OCI-LY7 (cell line): ENCODE measurements at regions of chr12 and their contacts with region 1.

Region 1: GRCh38 chr12:95574799-95575452 is 23.6 kb upstream of the USP44 start:
- DNase-seq: no peak
- H3K4me3 ChIP-seq: no peak overlapping the region
- H3K27ac ChIP-seq: peak overlapping the region; percentile 38
- H3K4me1 ChIP-seq: peaks cover 52% of the 10 kb centered on the region
- CTCF ChIP-seq: peak; percentile 88

Region 2: DNA sequence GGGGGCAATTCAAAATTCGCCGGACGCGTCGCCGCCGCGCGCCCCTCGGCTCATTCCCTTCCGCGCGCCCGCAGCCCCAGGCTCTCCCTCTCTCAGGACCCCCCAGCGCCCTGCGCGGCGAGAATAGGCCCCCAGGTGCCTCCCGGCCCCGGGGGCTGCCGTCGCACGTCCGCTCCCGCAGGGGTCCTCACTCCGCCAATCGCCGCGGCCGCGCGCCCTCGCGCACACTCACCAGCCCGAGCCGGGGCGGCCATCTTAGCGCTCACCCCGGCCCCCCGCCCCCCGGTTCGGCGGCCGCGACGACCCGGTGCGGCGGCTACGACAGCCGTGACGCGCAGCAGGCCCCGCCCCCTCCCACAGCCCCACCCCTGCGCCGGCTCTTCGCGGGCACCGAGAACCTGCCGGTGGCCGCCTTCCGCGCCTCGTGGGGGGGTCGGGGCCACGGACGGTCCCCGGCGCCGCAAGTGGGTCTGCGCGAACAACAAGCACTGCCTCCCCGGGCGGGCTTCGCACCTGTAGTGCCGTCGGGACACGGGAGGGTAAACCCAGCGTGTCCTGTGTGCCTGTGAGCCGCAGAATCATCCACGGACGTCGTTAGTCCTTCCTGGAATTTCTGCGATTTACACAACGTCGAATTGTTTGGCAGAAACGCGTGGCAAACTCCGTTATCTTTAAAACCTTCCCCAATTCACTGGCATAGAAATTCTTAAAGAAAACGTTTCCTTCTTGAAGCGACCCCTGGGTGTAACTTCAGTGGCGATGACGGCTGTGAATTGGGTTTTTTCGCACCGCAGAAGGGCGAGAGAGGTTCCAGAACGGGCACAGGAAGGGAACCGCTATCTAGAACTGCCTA is 26.2 kb before region 1 on chr12:
- CTCF ChIA-PET with region 1: no interaction called
- POLR2A ChIA-PET with region 1: interaction called, 12 read pairs
- intact Hi-C with region 1: no loop called
- DNase-seq: peak; percentile 58
- H3K4me3 ChIP-seq: peak overlapping the region; percentile 69
- H3K27ac ChIP-seq: peak overlapping the region; percentile 5
- H3K4me1 ChIP-seq: peaks cover 25% of the 10 kb centered on the region
- CTCF ChIP-seq: no peak

Region 3: GRCh38 chr12:95896846-95897245 is 321.9 kb after region 1 on chr12:
- CTCF ChIA-PET with region 1: no interaction called
- POLR2A ChIA-PET with region 1: no interaction called
- intact Hi-C with region 1: no loop called
- DNase-seq: no peak
- H3K4me3 ChIP-seq: no peak overlapping the region
- H3K27ac ChIP-seq: no peak overlapping the region
- H3K4me1 ChIP-seq: no peaks in the 10 kb centered on the region
- CTCF ChIP-seq: no peak

Region 4: DNA sequence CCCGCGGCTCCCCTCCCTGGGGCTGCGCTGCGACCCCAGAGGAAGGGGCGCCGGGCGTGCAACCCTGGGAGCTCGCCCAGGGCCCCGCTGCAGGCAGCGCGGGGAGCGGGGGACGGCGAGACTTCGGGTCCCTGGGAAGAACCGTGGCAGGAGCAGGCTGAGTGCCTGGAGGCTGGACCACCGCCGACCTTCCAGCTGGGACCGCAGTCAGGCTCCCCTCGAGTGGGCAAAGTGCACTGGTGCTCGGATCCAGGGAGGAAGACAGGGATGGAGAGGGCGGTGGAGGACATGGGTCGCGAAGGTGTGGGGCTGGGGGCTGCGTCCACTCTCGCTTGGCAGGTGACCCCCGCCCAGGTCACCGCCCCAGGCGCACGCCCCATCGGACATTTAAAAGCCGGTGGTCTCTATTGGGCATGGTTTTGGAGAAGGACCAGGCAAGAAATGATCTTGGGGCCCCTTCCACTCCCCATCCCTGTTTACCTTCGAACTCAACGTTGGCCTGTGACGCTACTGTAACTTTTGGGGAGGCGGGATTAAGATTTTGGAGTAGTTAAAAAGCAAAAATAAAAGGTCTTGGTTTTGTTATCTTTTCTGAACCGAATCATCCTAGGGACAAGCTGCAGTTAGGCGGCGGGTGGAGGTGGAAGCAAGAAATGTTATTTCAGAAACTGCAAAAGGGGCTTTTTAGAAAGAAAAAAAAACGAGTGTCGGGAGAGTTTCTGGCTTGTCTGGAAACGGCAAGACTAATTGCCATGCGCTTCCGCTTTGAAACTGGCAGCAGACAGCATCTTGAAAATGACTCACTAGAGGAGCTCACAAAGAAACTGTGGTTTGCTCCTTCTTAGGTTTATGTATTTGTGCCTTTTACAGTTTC is 620.3 kb after region 1 on chr12:
- CTCF ChIA-PET with region 1: no interaction called
- POLR2A ChIA-PET with region 1: no interaction called
- intact Hi-C with region 1: loop called (anchors 10 kb)
- DNase-seq: peak; percentile 84
- H3K4me3 ChIP-seq: peak overlapping the region; percentile 70
- H3K27ac ChIP-seq: peak overlapping the region; percentile 46
- H3K4me1 ChIP-seq: peaks cover 70% of the 10 kb centered on the region
- CTCF ChIP-seq: no peak